ENCODE measurements at regions of chr9 and their contacts with region 1.

Region 1: GRCh38 chr9:84697509-84698114 is 28.1 kb downstream of the NTRK2 start:
- DNase-seq: peak; percentile 85
- H3K4me3 ChIP-seq: no peak overlapping the region
- H3K27ac ChIP-seq: no peak overlapping the region
- H3K4me1 ChIP-seq: peaks cover 0 to 4% (median 0%) of the 10 kb centered on the region in 4 donors
- H3K27me3 ChIP-seq: no peaks in the 10 kb centered on the region
- CTCF ChIP-seq: peak; percentile 51 to 84 (median 68)
- EP300 ChIP-seq: no peak
- POLR2A ChIP-seq: no peak

Region 2: GRCh38 chr9:84659313-84659712 is 38.3 kb before region 1 on chr9:
- in situ Hi-C with region 1: no loop called
- intact Hi-C with region 1: no loop called
- DNase-seq: no peak
- H3K4me3 ChIP-seq: no peak overlapping the region
- H3K27ac ChIP-seq: no peak overlapping the region
- H3K4me1 ChIP-seq: no peaks in the 10 kb centered on the region
- H3K27me3 ChIP-seq: no peaks in the 10 kb centered on the region
- CTCF ChIP-seq: no peak
- EP300 ChIP-seq: no peak
- POLR2A ChIP-seq: no peak

Region 3: DNA sequence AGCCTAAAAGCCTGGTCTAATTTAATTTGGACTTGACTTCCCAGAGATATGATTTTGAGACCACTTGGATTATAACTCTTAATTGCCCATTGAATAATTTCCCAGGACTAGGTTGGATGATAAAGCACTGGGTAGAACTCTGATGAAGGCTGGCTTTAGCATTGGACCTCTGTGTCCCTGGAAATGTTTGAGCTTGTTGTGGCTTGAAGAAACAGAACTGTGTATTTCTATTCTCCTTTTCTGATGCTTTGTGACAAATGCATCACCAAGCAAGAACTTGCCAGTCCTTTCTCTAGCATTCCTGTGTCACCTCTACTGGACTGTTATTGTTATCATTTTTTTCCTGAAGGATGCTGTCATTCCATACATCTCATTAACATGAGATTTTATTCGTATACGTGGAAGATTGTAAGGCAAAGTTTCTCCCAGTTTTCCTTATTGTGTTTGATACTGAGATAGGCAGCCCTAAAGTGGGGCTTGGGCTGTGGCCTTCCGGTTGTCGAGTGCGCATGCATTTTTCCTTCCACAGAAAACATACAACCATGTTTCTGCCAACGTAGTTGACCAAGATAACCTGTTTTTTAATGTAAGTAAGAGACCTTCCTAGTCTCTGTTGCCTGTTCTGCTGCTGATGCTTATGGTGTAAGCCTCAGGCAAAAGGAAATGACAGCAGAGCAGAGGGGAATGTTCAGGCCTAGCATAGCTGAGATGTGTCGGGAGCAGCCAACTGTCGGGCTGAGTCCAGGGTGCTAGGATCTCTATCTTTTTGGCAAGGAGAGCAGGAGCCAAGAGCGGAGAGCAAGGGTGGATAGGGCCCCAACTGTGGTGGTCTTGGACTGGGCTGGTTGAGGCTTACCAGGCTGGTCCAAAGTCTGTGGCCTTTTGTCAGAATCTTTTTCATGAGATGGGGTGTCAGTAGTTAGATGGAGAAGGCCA is 25.8 kb before region 1 on chr9:
- in situ Hi-C with region 1: no loop called
- intact Hi-C with region 1: no loop called
- DNase-seq: no peak
- H3K4me3 ChIP-seq: no peak overlapping the region
- H3K27ac ChIP-seq: no peak overlapping the region
- H3K4me1 ChIP-seq: peaks cover 11 to 31% (median 20%) of the 10 kb centered on the region in 4 donors
- H3K27me3 ChIP-seq: peaks cover 53% of the 10 kb centered on the region
- CTCF ChIP-seq: no peak
- EP300 ChIP-seq: no peak
- POLR2A ChIP-seq: no peak

Region 4: GRCh38 chr9:84947363-84947972 is 249.9 kb after region 1 on chr9:
- in situ Hi-C with region 1: loop called (anchors 10 to 25 kb)
- intact Hi-C with region 1: no loop called
- DNase-seq: peak; percentile 46
- H3K4me3 ChIP-seq: no peak overlapping the region
- H3K27ac ChIP-seq: peak overlapping the region in 1 of 4 donors; percentile 15
- H3K4me1 ChIP-seq: peaks cover 0 to 20% (median 0%) of the 10 kb centered on the region in 4 donors
- H3K27me3 ChIP-seq: no peaks in the 10 kb centered on the region
- CTCF ChIP-seq: no peak
- EP300 ChIP-seq: no peak
- POLR2A ChIP-seq: no peak

Region 5: GRCh38 chr9:84953797-84954705 is 256.4 kb after region 1 on chr9:
- in situ Hi-C with region 1: loop called (anchors 10 to 25 kb)
- intact Hi-C with region 1: no loop called
- DNase-seq: peak; percentile 89
- H3K4me3 ChIP-seq: no peak overlapping the region
- H3K27ac ChIP-seq: no peak overlapping the region
- H3K4me1 ChIP-seq: peaks cover 0 to 23% (median 2%) of the 10 kb centered on the region in 4 donors
- H3K27me3 ChIP-seq: no peaks in the 10 kb centered on the region
- CTCF ChIP-seq: peak; percentile 78 to 93 (median 93)
- EP300 ChIP-seq: no peak
- POLR2A ChIP-seq: no peak

Region 6: GRCh38 chr9:85142968-85143367 is 445.4 kb after region 1 on chr9:
- in situ Hi-C with region 1: loop called in 1 of 4 experiments (anchors 10 kb)
- intact Hi-C with region 1: no loop called
- DNase-seq: no peak
- H3K4me3 ChIP-seq: no peak overlapping the region
- H3K27ac ChIP-seq: no peak overlapping the region
- H3K4me1 ChIP-seq: no peaks in the 10 kb centered on the region
- H3K27me3 ChIP-seq: no peaks in the 10 kb centered on the region
- CTCF ChIP-seq: peak; percentile 40 to 59 (median 51)
- EP300 ChIP-seq: no peak
- POLR2A ChIP-seq: no peak

Region 7: GRCh38 chr9:85258823-85259370 is 561.3 kb after region 1 on chr9:
- in situ Hi-C with region 1: loop called in 1 of 4 experiments (anchors 25 kb)
- intact Hi-C with region 1: no loop called
- DNase-seq: peak; percentile 57
- H3K4me3 ChIP-seq: no peak overlapping the region
- H3K27ac ChIP-seq: no peak overlapping the region
- H3K4me1 ChIP-seq: peaks cover 0 to 3% (median 0%) of the 10 kb centered on the region in 4 donors
- H3K27me3 ChIP-seq: no peaks in the 10 kb centered on the region
- CTCF ChIP-seq: peak; percentile 29 to 62 (median 53)
- EP300 ChIP-seq: no peak
- POLR2A ChIP-seq: no peak

Region 8: GRCh38 chr9:85610074-85610860 is 912.7 kb after region 1 on chr9:
- in situ Hi-C with region 1: loop called in 1 of 4 experiments (anchors 25 kb)
- intact Hi-C with region 1: no loop called
- DNase-seq: no peak
- H3K4me3 ChIP-seq: peak overlapping the region in 1 of 4 donors; percentile 30
- H3K27ac ChIP-seq: no peak overlapping the region
- H3K4me1 ChIP-seq: peaks cover 0 to 3% (median 0%) of the 10 kb centered on the region in 4 donors
- H3K27me3 ChIP-seq: no peaks in the 10 kb centered on the region
- CTCF ChIP-seq: peak; percentile 65 to 78 (median 70)
- EP300 ChIP-seq: no peak
- POLR2A ChIP-seq: no peak